ENCODE measurements at regions of chr2 and their contacts with region 1.

Region 1: GRCh38 chr2:197705121-197705911 is at the start of gene MARS2:
- DNase-seq: peak; percentile 86 to 98 (median 90)

Region 2: DNA sequence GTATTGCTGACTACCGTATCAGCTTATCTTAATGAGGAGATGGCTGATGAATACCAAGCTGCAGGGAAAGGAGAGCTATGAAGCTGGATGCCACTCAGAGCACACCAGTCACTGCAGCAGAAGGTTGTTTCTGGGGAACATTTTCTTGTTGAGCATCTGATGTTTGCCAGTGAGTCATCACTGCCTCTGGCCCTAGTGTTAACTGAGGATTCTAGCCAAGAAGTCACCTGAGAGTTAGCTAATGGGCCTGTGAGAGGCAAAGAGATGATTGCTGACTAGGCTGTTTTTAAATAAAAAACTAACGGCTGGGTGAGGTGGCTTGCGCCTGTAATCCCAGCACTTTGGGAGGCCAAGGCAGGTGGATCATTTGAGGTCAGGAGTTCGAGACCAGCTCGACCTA is 1027.9 kb before region 1 on chr2:
- intact Hi-C with region 1: no loop called
- DNase-seq: no peak

Region 3: DNA sequence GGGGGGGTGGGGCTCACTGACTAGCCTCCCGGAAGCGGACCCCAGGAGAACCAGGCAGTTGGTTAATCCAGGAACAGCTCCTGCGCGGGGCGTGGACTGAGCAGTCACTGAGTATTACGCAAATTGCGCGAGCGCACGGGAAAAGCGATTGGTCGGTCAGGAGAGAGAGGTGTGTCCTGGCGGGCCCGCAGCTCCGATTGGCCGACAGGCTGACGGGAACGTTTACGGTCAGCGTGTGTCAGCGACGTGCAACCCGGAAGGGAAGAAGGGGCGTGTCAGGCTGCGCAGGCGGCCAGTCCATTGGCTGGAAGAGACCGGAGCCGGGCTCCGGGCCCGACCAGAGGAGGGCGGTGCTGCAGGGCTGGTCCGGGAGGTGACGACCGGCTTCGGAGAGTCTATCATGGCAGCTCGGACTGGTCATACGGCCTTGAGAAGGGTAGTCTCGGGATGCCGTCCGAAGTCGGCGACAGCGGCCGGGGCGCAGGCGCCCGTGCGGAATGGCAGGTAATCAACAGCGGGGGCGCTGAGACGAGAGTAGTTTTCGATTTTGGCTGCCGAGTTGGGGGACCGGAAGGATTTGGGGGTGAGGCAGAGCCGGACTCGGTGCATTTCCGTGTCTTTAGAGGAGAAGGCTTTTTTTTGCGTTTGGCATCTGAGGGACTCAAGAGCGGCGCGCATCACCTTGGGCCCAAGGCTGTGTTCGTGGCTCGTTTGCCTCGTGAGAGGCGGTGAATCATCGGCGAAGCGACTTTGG is 252.0 kb before region 1 on chr2 and contains the start of gene COQ10B:
- intact Hi-C with region 1: loop called (anchors 2 kb)
- DNase-seq: peak; percentile 98 to 100 (median 100)

Region 4: DNA sequence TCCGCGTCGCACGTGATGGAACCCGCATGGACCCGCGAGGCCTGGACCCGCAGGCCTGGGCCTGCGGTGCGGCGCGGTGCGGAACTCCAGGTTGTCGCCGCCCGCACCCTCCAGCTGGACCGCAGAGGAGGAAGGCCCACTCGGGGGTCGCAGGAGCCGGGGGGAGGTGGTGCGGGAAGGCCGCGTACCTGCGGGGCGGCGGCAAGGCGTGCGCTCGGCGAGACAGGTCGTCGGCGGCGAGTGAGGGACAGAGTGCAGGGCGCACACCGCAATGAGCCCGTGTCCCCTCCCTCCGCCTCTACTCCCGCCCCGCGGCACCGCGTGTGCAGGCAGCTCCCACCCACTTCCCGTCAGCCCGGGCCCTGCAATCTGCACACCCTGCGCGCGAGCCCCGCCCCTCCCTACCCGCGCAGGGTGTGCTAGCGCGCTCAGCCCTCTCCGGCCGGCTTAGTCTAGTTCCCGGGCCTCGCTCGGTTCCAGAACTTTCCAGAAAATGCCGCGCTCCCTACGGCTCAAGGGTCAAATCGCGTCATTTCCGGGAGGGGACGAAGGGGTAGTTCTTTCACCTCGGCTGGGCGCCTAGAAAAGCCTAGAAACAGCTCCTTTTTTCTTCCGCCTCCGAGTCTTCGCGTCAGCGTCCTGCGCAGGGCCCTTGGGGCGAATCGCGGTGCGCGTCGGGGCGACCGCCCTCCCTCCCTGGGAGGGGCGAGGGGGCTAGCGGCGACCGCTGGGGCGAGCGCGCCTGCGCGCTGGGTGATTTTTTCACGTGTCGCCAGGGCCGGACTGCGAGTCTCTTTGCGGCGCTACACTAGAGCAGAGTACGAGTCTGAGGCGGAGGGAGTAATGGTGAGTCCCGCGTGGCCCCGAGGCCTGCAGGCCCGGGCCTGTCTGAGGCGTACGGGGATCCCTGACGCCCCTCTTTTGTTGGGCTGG is 205.5 kb before region 1 on chr2 and contains the starts of genes HSPD1 and HSPE1:
- intact Hi-C with region 1: loop called (anchors 1 kb)
- DNase-seq: peak; percentile 93 to 100 (median 98)

Region 5: DNA sequence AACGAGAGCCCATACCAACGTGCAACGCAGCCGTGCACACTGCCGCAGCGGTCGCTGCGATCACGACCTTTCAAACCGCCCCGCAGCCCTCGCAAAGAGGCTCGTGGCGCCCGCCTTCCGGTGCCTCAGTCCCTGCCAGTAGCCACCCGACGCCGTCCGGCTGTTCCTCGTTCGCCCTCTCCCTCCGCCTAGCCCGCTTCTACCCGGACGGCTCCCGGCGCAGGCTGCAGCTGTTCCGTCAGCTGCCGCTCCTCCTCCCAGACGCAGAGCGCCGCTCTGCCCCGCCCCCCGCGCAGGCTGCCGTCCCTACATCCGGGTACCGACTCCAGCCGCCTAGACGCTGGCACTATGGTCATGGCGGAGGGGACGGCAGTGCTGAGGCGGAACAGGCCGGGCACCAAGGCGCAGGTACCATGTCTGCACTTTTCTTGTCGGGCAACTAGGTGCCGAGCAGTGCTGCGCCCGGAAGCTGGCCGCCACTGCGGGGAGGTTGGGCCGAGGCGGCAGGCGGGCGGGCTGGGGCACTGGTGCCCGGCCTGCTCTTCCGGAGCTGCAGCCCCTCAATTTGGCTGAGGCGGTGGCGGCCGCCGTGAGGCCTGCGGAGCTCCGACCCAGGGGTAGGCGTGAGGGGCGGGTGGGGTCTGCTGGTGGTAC is 189.4 kb before region 1 on chr2 and contains the start of gene MOB4:
- intact Hi-C with region 1: loop called (anchors 5 kb)
- DNase-seq: peak; percentile 92 to 99 (median 95)

Region 6: GRCh38 chr2:197740200-197740599 is 34.9 kb after region 1 on chr2:
- intact Hi-C with region 1: no loop called
- DNase-seq: no peak

Region 7: GRCh38 chr2:197777823-197778407 is 72.6 kb after region 1 on chr2:
- intact Hi-C with region 1: loop called (anchors 1 kb)
- DNase-seq: no peak

Region 8: DNA sequence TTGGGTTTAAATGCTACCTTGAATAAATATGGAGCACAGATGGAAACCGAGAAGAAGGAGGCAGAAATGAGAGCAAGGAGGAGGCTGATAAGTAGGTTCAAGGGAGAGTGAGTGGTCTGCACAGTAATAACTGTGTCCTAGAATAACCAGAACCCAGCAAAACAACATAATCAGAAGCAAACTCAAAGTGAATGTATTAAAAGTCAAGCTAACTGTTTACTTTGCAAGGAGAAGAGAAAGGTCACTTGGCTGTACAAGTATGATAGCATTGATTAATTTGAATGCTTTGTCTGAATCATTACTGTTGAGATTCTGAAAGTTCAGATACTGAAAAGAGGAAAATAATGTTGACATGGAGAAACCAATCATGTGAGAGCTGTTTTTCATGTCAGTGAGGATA is 357.9 kb after region 1 on chr2:
- intact Hi-C with region 1: no loop called
- DNase-seq: no peak

Region 9: GRCh38 chr2:198296665-198297308 is 591.5 kb after region 1 on chr2:
- intact Hi-C with region 1: loop called (anchors 5 kb)
- DNase-seq: peak in 8 of 10 donors; percentile 28 to 91 (median 67)

Region 10: GRCh38 chr2:198645816-198646215 is 940.5 kb after region 1 on chr2:
- intact Hi-C with region 1: no loop called
- DNase-seq: no peak

Measured in posterior cingulate gyrus (tissue), 11 donors.